BJ (cell line): ENCODE measurements at regions of chr9 and their contacts with region 1.

Region 1: GRCh38 chr9:109875495-109876129 is 95.6 kb downstream of the PALM2AKAP2 start:
- DNase-seq: no peak
- H3K4me3 ChIP-seq: no peak overlapping the region
- H3K27me3 ChIP-seq: no peaks in the 10 kb centered on the region
- CTCF ChIP-seq: no peak

Region 2: GRCh38 chr9:109538337-109538736 is 337.3 kb before region 1 on chr9:
- CTCF ChIA-PET with region 1: no interaction called
- POLR2A ChIA-PET with region 1: no interaction called
- DNase-seq: no peak
- H3K4me3 ChIP-seq: no peak overlapping the region
- H3K27me3 ChIP-seq: peaks cover 5% of the 10 kb centered on the region
- CTCF ChIP-seq: no peak

Region 3: DNA sequence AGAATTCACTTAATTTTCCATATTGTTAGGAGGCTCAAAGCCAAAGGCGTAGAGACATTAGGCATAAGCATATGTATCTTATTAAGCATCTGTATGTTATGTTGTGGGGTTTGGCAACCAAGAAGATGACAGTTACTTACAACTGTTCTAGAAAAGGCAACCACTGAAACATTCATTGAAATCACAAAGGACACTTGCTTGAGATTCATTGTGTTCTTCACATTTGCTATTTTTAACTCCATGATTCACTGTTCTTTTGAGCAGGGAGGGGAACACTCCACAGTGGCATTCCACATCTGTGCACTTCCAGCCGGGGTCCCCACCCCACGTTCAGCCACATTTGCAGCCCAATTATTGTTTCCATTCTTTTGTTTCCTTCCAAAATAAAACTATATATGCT is 11.5 kb after region 1 on chr9:
- CTCF ChIA-PET with region 1: interaction called, 17 read pairs
- POLR2A ChIA-PET with region 1: no interaction called
- DNase-seq: no peak
- H3K4me3 ChIP-seq: no peak overlapping the region
- H3K27me3 ChIP-seq: no peaks in the 10 kb centered on the region
- CTCF ChIP-seq: no peak

Region 4: DNA sequence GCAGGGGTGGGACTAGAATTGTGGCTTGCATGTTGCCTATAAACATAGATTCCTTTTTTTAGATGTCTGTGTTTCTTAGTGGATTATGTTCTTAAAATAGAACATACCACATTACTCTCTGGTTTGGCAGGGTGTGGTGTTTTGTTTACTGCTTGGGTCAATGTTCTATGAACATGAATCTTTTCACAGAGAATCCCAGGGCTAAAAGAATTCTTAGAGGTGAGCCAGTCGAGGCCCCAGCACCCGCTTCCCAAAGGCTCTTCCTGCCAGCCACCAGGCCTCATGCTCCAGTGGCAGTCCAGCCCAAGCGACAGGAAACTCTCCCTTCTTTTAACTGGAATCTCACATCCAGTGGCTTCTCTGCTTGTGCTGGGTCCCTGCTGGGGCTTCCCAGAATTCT is 205.8 kb after region 1 on chr9:
- CTCF ChIA-PET with region 1: no interaction called
- POLR2A ChIA-PET with region 1: no interaction called
- DNase-seq: peak; percentile 70
- H3K4me3 ChIP-seq: no peak overlapping the region
- H3K27me3 ChIP-seq: no peaks in the 10 kb centered on the region
- CTCF ChIP-seq: no peak